ENCODE measurements at regions of chr4 and their contacts with region 1.

Region 1: GRCh38 chr4:1547856-1548826 is 136.0 kb downstream of the FAM53A start:
- DNase-seq: peak in 1 of 9 experiments; percentile 14
- ATAC-seq: peak; percentile 14
- H3K4me3 ChIP-seq: no peak overlapping the region
- H3K4me3 Mint-ChIP-seq: peak overlapping the region; percentile 20
- H3K27ac ChIP-seq: no peak overlapping the region
- H3K27ac Mint-ChIP-seq: peak overlapping the region; percentile 72
- H3K4me1 ChIP-seq: peaks cover 20% of the 10 kb centered on the region
- H3K4me1 Mint-ChIP-seq: peaks cover 21% of the 10 kb centered on the region
- H3K27me3 ChIP-seq: no peaks in the 10 kb centered on the region
- H3K27me3 Mint-ChIP-seq: peaks cover 6% of the 10 kb centered on the region
- CTCF ChIP-seq: no peak

Region 2: DNA sequence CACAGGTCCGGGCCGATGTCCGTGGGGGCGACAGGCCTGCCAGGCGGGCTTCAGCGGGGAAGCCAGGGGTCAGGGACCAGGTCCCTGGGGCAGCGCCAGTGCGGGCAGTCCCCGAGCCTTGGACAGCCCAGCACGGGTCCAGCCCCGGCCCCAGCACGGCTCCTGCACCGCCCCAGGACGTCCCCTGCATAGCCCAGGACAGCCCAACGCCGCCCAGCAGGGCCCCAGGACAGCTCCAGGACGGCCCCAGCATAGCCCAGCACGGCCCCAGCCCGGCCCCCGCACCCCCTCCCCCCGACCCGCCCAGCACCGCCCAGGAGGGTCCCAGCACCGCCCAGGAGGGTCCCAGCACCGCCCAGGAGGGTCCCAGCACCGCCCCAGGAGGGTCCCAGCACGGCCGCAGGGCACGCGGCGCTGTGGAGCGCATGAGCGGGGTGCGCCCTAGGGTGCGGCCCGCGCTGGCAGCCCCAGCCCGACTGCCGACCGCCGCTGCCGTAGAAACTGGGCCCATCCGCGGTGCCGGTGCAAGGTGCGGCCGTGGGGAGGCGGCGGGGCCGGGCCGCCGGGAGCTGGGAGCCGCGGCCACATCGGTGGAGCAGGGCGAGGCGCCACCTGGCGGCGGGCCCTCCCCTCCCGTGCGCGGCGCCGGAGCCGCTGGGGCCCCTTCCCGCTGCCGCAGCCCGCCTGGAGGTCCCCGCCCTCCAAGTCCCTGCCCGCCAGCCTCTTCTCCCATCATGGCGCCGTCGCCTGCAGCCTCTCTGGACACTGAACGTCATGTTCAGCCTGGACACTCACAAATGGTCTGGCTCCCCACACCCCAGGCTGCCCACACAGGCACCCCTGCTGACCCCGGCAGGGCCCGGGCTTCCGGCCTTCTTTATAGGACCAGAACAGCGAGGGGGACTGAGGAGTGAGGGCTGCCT is 35.1 kb before region 1 on chr4:
- CTCF ChIA-PET with region 1: interaction called, 4 read pairs
- POLR2A ChIA-PET with region 1: no interaction called
- intact Hi-C with region 1: loop called in 1 of 2 experiments (anchors 5 kb)
- DNase-seq: peak in 8 of 9 experiments; percentile 9 to 67 (median 40)
- ATAC-seq: peak; percentile 52
- H3K4me3 ChIP-seq: no peak overlapping the region
- H3K4me3 Mint-ChIP-seq: no peak overlapping the region
- H3K27ac ChIP-seq: no peak overlapping the region
- H3K27ac Mint-ChIP-seq: no peak overlapping the region
- H3K4me1 ChIP-seq: peaks cover 4% of the 10 kb centered on the region
- H3K4me1 Mint-ChIP-seq: no peaks in the 10 kb centered on the region
- H3K27me3 ChIP-seq: peaks cover 5 to 7% of the 10 kb centered on the region in 2 experiments
- H3K27me3 Mint-ChIP-seq: peaks cover 11% of the 10 kb centered on the region
- CTCF ChIP-seq: peak; percentile 65

Region 3: GRCh38 chr4:1579901-1580691 is 32.0 kb after region 1 on chr4:
- CTCF ChIA-PET with region 1: interaction called, 4 read pairs
- POLR2A ChIA-PET with region 1: no interaction called
- intact Hi-C with region 1: loop called in 1 of 2 experiments (anchors 2 kb)
- DNase-seq: peak; percentile 83 to 96 (median 93)
- ATAC-seq: peak; percentile 82
- H3K4me3 ChIP-seq: peak overlapping the region; percentile 70 to 78
- H3K4me3 Mint-ChIP-seq: peak overlapping the region; percentile 79
- H3K27ac ChIP-seq: peak overlapping the region; percentile 66 to 73
- H3K27ac Mint-ChIP-seq: peak overlapping the region; percentile 79
- H3K4me1 ChIP-seq: no peaks in the 10 kb centered on the region
- H3K4me1 Mint-ChIP-seq: peaks cover 11% of the 10 kb centered on the region
- H3K27me3 ChIP-seq: no peaks in the 10 kb centered on the region
- H3K27me3 Mint-ChIP-seq: no peaks in the 10 kb centered on the region
- CTCF ChIP-seq: no peak

Region 4: GRCh38 chr4:1683736-1684505 is 135.8 kb after region 1 on chr4 and contains the start of gene FAM53A:
- CTCF ChIA-PET with region 1: no interaction called
- POLR2A ChIA-PET with region 1: no interaction called
- intact Hi-C with region 1: no loop called
- DNase-seq: peak in 7 of 9 experiments; percentile 7 to 95 (median 43)
- ATAC-seq: peak; percentile 94
- H3K4me3 ChIP-seq: peak within 1 kb of the TSS; percentile 42 to 43
- H3K4me3 Mint-ChIP-seq: peak within 1 kb of the TSS; percentile 89
- H3K27ac ChIP-seq: peak within 1 kb of the TSS in 1 of 2 experiments; percentile 4
- H3K27ac Mint-ChIP-seq: peak within 1 kb of the TSS; percentile 81
- H3K4me1 ChIP-seq: no peaks in the 10 kb centered on the region
- H3K4me1 Mint-ChIP-seq: peaks cover 12% of the 10 kb centered on the region
- H3K27me3 ChIP-seq: no peaks in the 10 kb centered on the region
- H3K27me3 Mint-ChIP-seq: no peaks in the 10 kb centered on the region
- CTCF ChIP-seq: no peak
- total RNA-seq, gene FAM53A: 1.8 to 1.9 TPM

Measured in CD8-positive, alpha-beta T cell (primary cell).